IMR-90 (cell line): ENCODE measurements at regions of chr17 and their contacts with region 1.

Region 1: DNA sequence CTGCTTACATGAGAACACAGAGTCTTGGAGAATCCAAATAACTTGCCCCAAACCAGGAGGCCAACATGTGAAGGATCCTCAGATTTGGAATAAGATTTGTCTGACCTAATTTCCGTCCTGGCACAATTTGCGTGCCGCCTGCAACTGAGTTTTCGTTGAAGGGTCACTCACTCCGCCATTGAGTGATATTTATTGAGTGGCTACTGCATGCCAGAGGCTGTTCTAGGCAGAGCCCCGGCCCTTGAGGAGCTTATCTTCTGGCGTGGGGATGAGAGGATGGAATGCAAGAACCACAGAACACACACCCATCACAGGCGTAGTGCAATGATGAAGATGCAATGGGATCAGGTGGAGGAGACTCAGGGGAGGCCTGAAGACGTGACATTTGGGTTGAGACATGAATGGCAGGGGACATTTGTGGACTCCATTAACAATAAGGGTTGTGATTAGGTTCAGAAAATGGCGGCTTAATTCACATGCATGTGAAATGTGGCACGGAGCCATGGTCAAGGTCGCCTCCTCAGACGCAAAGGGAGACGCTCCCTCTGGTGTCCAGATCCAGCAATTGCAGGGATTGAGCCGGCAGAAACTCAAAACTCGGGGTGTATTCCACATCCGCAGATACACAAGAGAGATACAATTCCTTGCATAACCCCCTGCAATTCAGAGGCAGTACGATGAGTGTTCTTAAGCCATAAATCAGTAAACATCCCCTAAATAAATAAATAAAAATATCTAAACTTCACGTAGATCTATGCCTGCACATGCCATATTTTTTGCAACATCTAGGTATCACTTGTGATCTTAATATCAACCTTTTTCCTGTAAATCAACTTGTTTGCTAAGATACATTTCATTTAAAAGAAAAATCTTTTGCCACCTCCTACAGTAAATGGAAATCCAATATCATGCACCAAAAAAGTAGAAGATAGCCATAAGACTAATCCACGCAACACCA is 57.9 kb upstream of the CACNG4 start:
- DNase-seq: peak; percentile 76
- ATAC-seq: peak; percentile 60
- H3K4me3 ChIP-seq: no peak overlapping the region
- H3K27ac ChIP-seq: no peak overlapping the region
- H3K4me1 ChIP-seq: peaks cover 6% of the 10 kb centered on the region
- H3K27me3 ChIP-seq: peaks cover 16% of the 10 kb centered on the region
- CTCF ChIP-seq: peak; percentile 81
- POLR2A ChIP-seq: no peak
- RAD21 ChIP-seq: peak; percentile 83

Region 2: GRCh38 chr17:66191593-66192382 is 714.8 kb before region 1 on chr17 and contains the start of gene CEP112:
- CTCF ChIA-PET with region 1: no interaction called
- POLR2A ChIA-PET with region 1: no interaction called
- dilution Hi-C with region 1: no loop called
- in situ Hi-C with region 1: loop called (anchors 10 kb)
- intact Hi-C with region 1: no loop called
- DNase-seq: peak; percentile 53
- ATAC-seq: peak; percentile 86
- H3K4me3 ChIP-seq: peak within 1 kb of the TSS; percentile 62
- H3K27ac ChIP-seq: peak within 1 kb of the TSS; percentile 51
- H3K4me1 ChIP-seq: peaks cover 7% of the 10 kb centered on the region
- H3K27me3 ChIP-seq: no peaks in the 10 kb centered on the region
- CTCF ChIP-seq: no peak
- POLR2A ChIP-seq: no peak
- RAD21 ChIP-seq: no peak
- total RNA-seq, gene CEP112: 3.6 and 5.6 TPM in 2 replicates

Region 3: DNA sequence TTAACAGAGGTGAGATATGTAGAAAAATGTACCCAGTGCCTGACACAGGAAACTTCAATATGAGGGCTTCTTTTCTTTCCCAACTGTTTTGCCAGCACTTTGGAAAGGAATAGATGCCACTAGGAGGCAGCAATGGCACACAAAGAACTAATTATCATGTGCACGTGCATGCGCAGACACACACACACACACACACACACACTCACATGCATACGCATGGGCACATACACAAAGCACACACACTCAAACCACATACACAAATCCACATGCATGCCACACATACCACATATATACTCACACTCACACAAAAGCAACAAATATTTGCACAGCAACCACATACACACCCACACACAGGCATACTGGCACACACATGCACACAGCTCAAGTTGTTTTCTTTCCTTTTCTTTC is 705.9 kb before region 1 on chr17:
- CTCF ChIA-PET with region 1: no interaction called
- POLR2A ChIA-PET with region 1: no interaction called
- dilution Hi-C with region 1: no loop called
- in situ Hi-C with region 1: loop called (anchors 10 kb)
- intact Hi-C with region 1: loop called (anchors 5 kb)
- DNase-seq: peak; percentile 83
- ATAC-seq: peak; percentile 77
- H3K4me3 ChIP-seq: no peak overlapping the region
- H3K27ac ChIP-seq: no peak overlapping the region
- H3K4me1 ChIP-seq: no peaks in the 10 kb centered on the region
- H3K27me3 ChIP-seq: no peaks in the 10 kb centered on the region
- CTCF ChIP-seq: peak; percentile 80
- POLR2A ChIP-seq: no peak
- RAD21 ChIP-seq: peak; percentile 85

Region 4: GRCh38 chr17:66715745-66716156 is 190.8 kb before region 1 on chr17:
- CTCF ChIA-PET with region 1: no interaction called
- POLR2A ChIA-PET with region 1: no interaction called
- dilution Hi-C with region 1: no loop called
- in situ Hi-C with region 1: loop called (anchors 5 kb)
- intact Hi-C with region 1: no loop called
- DNase-seq: peak; percentile 75
- ATAC-seq: peak; percentile 71
- H3K4me3 ChIP-seq: no peak overlapping the region
- H3K27ac ChIP-seq: no peak overlapping the region
- H3K4me1 ChIP-seq: no peaks in the 10 kb centered on the region
- H3K27me3 ChIP-seq: no peaks in the 10 kb centered on the region
- CTCF ChIP-seq: peak; percentile 67
- POLR2A ChIP-seq: no peak
- RAD21 ChIP-seq: peak; percentile 69

Region 5: GRCh38 chr17:66727639-66728570 is 178.7 kb before region 1 on chr17:
- CTCF ChIA-PET with region 1: no interaction called
- POLR2A ChIA-PET with region 1: no interaction called
- dilution Hi-C with region 1: no loop called
- in situ Hi-C with region 1: no loop called
- intact Hi-C with region 1: loop called (anchors 1 kb)
- DNase-seq: peak; percentile 50
- ATAC-seq: peak; percentile 76
- H3K4me3 ChIP-seq: no peak overlapping the region
- H3K27ac ChIP-seq: no peak overlapping the region
- H3K4me1 ChIP-seq: peaks cover 4% of the 10 kb centered on the region; the same call in 1 of the 2 replicates
- H3K27me3 ChIP-seq: no peaks in the 10 kb centered on the region
- CTCF ChIP-seq: peak; percentile 58
- POLR2A ChIP-seq: no peak
- RAD21 ChIP-seq: peak; percentile 56

Region 6: GRCh38 chr17:67157732-67158639 is 251.4 kb after region 1 on chr17:
- CTCF ChIA-PET with region 1: no interaction called
- POLR2A ChIA-PET with region 1: no interaction called
- dilution Hi-C with region 1: no loop called
- in situ Hi-C with region 1: no loop called
- intact Hi-C with region 1: loop called (anchors 5 kb)
- DNase-seq: peak; percentile 57
- ATAC-seq: peak; percentile 85
- H3K4me3 ChIP-seq: no peak overlapping the region
- H3K27ac ChIP-seq: no peak overlapping the region
- H3K4me1 ChIP-seq: no peaks in the 10 kb centered on the region
- H3K27me3 ChIP-seq: no peaks in the 10 kb centered on the region
- CTCF ChIP-seq: peak; percentile 55
- POLR2A ChIP-seq: no peak
- RAD21 ChIP-seq: peak; percentile 68